HEK293 (cell line): ENCODE measurements at regions of chr7 and their contacts with region 1.

Region 1: GRCh38 chr7:1707756-1708595 is 37.9 kb downstream of the ELFN1 start:
- H3K4me3 ChIP-seq: no peak overlapping the region
- H3K27ac ChIP-seq: no peak overlapping the region
- H3K4me1 ChIP-seq: no peaks in the 10 kb centered on the region
- CTCF ChIP-seq: no peak

Region 2: GRCh38 chr7:1697499-1698125 is 10.4 kb before region 1 on chr7:
- CTCF ChIA-PET with region 1: interaction called, 10 read pairs
- POLR2A ChIA-PET with region 1: no interaction called
- H3K4me3 ChIP-seq: no peak overlapping the region
- H3K27ac ChIP-seq: no peak overlapping the region
- H3K4me1 ChIP-seq: no peaks in the 10 kb centered on the region
- CTCF ChIP-seq: no peak